Breast epithelium (tissue), 4 donors: ENCODE measurements at regions of chr5 and their contacts with region 1.

Region 1: DNA sequence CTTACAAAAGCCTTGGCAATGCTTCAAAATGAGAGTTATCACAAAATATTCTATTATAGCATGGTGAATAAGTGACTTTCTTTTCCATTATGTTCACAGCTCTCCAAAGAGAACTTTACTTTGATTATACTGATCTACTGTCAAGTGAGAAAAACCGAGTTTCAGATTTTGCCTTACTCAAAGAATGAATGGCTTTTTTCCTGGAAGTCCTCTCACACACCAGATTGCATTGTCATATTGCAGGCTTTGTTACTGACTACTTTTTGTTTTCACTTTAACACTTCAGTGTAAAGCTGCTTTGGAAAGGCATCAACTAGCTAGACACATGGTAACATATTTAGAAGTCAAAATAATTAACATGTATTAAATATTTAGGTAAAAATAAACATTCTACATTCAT is 765.2 kb upstream of the NUDT12 start:
- DNase-seq: no peak
- H3K4me3 ChIP-seq: no peak overlapping the region
- H3K27ac ChIP-seq: no peak overlapping the region
- H3K4me1 ChIP-seq: no peaks in the 10 kb centered on the region
- H3K27me3 ChIP-seq: no peaks in the 10 kb centered on the region
- CTCF ChIP-seq: no peak
- POLR2A ChIP-seq: no peak

Region 2: GRCh38 chr5:104347119-104347708 is 19.4 kb after region 1 on chr5:
- intact Hi-C with region 1: no loop called
- DNase-seq: no peak
- H3K4me3 ChIP-seq: no peak overlapping the region
- H3K27ac ChIP-seq: no peak overlapping the region
- H3K4me1 ChIP-seq: no peaks in the 10 kb centered on the region
- H3K27me3 ChIP-seq: no peaks in the 10 kb centered on the region
- CTCF ChIP-seq: no peak
- POLR2A ChIP-seq: no peak

Region 3: DNA sequence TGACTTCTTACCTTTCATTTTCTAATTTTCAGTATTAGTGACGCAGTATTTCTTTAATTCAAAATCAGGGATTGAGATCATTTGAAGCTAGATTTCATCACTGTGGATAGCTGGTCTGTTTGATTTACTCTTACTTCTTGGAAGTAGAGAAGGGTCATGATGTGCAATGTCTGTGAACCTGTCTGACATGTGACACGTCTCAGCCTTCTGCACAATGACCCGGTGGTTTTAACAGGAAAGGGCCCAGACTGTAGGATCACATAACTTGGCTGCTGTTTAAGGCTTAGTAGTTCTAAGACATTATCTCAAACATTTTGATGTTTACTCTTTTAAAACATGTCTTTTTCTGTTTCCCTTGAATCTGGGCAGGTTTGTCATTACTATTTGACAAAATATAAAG is 58.1 kb after region 1 on chr5:
- intact Hi-C with region 1: loop called (anchors 2 kb)
- DNase-seq: no peak
- H3K4me3 ChIP-seq: no peak overlapping the region
- H3K27ac ChIP-seq: no peak overlapping the region
- H3K4me1 ChIP-seq: no peaks in the 10 kb centered on the region
- H3K27me3 ChIP-seq: no peaks in the 10 kb centered on the region
- CTCF ChIP-seq: no peak
- POLR2A ChIP-seq: no peak